ENCODE measurements at regions of chr1 and their contacts with region 1.

Region 1: DNA sequence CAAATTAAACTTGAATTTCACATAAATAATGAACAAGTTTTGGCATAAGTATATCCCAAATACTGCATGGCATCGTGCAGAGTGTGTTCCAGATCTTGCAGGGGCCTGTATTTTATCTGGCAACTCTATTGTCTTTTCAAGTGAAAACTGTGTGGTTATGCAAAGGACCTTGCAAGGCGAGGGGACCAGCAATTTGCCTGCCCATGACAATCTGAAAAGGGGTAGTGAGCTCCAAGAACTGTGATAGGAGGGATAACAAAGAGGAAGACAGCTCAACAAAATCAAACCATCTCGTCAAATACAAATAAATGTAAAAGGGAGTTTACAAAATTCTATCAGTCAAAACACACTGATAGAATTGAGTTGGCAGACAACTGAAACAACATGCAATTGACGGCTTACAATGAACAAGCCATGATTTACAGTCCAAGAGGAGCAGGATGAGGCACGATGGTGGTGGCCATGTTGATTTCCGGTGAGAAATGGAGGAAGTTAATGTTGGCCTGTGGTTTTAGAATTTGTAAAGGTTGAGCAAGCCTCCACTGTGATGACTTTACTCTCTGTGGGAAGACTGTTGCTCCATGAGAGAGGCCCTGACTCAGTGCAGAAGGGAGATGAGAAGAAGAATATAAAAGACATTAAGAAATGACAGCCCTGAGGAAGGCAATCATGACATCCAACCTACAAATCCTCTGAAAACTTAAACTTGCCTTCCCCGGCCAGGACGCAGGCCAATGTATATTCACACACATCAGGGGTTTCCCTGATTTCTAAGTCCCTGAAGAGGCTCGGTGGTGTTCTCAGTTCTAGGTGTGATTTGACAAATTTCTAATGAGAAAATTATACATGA is 132.2 kb downstream of the ADSS2 start:
- DNase-seq: peak; percentile 62 to 76
- ATAC-seq: peak; percentile 69 to 88 (median 88)
- H3K4me3 ChIP-seq: no peak overlapping the region
- H3K4me3 Mint-ChIP-seq: peak overlapping the region; percentile 80
- H3K27ac ChIP-seq: peak overlapping the region; percentile 67
- H3K27ac Mint-ChIP-seq: peak overlapping the region; percentile 88 to 92
- H3K4me1 ChIP-seq: peaks cover 90% of the 10 kb centered on the region
- H3K4me1 Mint-ChIP-seq: peaks cover 79 to 83% of the 10 kb centered on the region in 2 donors
- H3K27me3 ChIP-seq: no peaks in the 10 kb centered on the region
- H3K27me3 Mint-ChIP-seq: no peaks in the 10 kb centered on the region
- CTCF ChIP-seq: no peak

Region 2: GRCh38 chr1:243508303-243508713 is 811.2 kb before region 1 on chr1:
- intact Hi-C with region 1: loop called (anchors 5 kb)
- DNase-seq: peak; percentile 60 to 73
- ATAC-seq: peak; percentile 91 to 96 (median 96)
- H3K4me3 ChIP-seq: no peak overlapping the region
- H3K4me3 Mint-ChIP-seq: peak overlapping the region; percentile 83
- H3K27ac ChIP-seq: peak overlapping the region; percentile 76
- H3K27ac Mint-ChIP-seq: peak overlapping the region; percentile 86 to 90
- H3K4me1 ChIP-seq: peaks cover 40% of the 10 kb centered on the region
- H3K4me1 Mint-ChIP-seq: peaks cover 64 to 74% of the 10 kb centered on the region in 2 donors
- H3K27me3 ChIP-seq: no peaks in the 10 kb centered on the region
- H3K27me3 Mint-ChIP-seq: no peaks in the 10 kb centered on the region
- CTCF ChIP-seq: no peak

Region 3: DNA sequence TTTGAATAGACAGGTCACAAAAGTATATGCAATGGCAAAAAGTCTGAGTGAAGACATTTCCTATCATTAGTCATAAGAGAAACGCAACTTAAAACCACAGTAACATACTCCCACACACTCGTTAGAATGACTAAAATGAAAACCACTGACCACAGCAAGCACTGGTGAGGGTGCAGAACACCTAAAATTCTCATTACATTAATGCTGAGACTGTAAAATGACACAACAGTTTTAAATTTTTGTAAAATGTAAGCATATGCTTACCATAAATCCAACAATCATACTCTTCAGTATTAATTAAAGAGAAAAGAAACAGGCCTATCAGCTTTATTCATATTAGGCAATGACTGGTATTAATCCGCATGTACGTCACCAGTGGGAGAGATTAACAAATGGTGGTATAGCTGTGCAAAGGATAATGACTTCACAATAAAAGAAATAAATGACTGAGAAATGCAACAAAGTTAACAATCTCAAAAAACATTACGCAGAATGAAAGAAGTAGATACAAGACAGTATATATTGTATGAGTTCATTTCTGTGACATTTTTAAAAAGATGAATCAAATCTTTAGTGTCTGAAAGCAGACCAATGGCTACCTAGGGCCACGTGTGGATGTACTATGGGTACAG is 723.0 kb before region 1 on chr1:
- intact Hi-C with region 1: loop called (anchors 5 kb)
- DNase-seq: peak in 1 of 2 donors; percentile 66
- ATAC-seq: peak; percentile 78 to 93 (median 86)
- H3K4me3 ChIP-seq: no peak overlapping the region
- H3K4me3 Mint-ChIP-seq: peak overlapping the region; percentile 67
- H3K27ac ChIP-seq: peak overlapping the region; percentile 80
- H3K27ac Mint-ChIP-seq: peak overlapping the region; percentile 84 to 90
- H3K4me1 ChIP-seq: peaks cover 4% of the 10 kb centered on the region
- H3K4me1 Mint-ChIP-seq: peaks cover 26 to 31% of the 10 kb centered on the region in 2 donors
- H3K27me3 ChIP-seq: no peaks in the 10 kb centered on the region
- H3K27me3 Mint-ChIP-seq: no peaks in the 10 kb centered on the region
- CTCF ChIP-seq: no peak

Region 4: DNA sequence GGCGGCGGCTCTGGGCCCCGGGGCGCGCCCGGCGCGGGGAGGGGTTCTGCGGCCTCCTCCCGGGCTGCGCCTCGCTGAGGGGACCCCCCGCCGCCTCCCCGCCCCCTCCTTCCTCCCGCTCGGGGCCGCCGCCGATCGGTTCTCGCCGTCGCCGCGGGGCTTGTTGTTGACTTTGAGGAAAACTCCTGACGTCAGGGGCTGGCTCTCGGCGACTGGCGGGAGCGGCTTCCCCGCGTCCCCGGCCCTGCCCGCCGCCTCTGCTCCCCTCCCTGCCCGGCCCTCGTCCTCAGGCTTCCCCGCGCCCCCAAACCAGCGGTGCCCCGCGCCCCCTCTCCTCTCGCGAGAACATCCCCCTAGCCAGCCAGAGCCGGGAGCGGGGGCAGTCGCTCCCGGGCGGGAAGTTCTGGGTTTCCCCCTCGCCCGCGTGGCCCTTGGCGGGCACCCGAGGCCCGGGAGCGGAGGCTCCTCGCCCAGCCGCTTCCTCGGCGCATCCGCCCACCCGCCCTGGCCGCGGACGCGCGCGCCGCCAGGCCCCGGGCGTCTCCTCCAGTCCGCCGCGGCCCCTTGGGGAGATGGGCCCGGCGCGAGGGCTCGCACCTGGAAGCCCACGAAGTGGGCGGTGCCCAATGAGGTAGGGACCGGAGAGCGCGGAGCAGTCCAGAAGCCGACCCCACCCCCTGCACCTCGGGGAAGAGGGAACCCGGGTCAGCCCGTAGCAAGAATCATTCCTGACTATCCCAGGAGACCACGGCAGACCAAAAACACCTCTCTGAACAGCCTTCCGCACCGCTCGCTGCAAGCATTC is 468.9 kb before region 1 on chr1:
- intact Hi-C with region 1: loop called (anchors 5 kb)
- DNase-seq: peak; percentile 81 to 90
- ATAC-seq: peak; percentile 42 to 58 (median 52)
- H3K4me3 ChIP-seq: peak overlapping the region; percentile 85
- H3K4me3 Mint-ChIP-seq: peak overlapping the region; percentile 90
- H3K27ac ChIP-seq: peak overlapping the region; percentile 89
- H3K27ac Mint-ChIP-seq: peak overlapping the region; percentile 89 to 99
- H3K4me1 ChIP-seq: peaks cover 10% of the 10 kb centered on the region
- H3K4me1 Mint-ChIP-seq: peaks cover 26 to 30% of the 10 kb centered on the region in 2 donors
- H3K27me3 ChIP-seq: no peaks in the 10 kb centered on the region
- H3K27me3 Mint-ChIP-seq: peaks cover 5 to 8% of the 10 kb centered on the region in 2 donors
- CTCF ChIP-seq: no peak